SK-N-SH (cell line): ENCODE measurements at regions of chr9 and their contacts with region 1.

Region 1: GRCh38 chr9:122107291-122107805 is 14.2 kb upstream of the TTLL11 start:
- DNase-seq: peak; percentile 12
- H3K4me3 ChIP-seq: no peak overlapping the region
- H3K27ac ChIP-seq: no peak overlapping the region
- H3K4me1 ChIP-seq: no peaks in the 10 kb centered on the region
- H3K27me3 ChIP-seq: no peaks in the 10 kb centered on the region
- CTCF ChIP-seq: no peak
- EP300 ChIP-seq: no peak
- RAD21 ChIP-seq: no peak

Region 2: DNA sequence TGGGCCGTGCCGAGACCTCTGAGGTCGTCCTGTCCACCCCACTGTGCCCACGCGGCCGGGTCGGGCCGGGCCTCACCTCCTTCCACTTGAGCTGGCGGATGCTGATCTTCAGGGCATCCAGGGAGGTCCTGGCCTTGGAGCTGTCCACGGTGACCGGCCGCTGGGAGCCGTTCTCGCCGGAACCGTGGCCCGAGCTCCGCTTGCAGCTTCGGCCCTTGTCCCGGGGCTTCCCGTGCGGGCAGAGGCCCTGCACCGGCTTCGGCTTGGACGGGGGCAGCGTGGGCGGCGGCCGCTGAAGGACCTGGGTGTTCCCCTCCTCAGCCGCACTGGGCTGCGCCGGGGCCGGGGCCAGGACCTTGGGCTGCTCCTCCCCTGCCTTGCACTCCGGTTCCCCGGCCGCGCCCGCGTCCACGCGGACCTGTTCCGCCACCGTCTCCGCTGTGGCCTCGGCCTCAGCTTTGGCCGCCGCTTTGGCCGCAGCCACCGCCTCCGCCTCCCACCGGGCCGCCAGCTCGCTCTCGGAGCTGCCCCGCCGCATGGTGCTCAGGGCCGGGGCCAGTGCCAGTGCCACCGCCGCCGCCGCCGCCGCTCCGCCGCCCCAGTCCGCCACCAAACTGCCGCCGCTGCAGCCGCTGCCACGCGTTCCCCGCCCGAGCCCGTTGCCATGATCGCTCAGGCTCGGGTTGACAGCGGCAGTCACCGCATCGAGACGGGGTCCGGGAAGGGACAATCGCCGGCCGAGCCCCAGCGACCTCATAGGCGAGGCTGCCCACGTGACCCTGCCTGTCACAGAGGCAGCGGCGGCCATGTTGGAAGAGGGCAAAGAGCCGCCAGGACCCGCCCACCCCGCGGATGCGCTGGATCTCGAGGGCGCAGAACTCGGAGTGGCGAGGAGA is 14.5 kb before region 1 on chr9 and contains the start of gene TTLL11:
- CTCF ChIA-PET with region 1: interaction called, 55 read pairs
- POLR2A ChIA-PET with region 1: no interaction called
- DNase-seq: peak; percentile 98
- H3K4me3 ChIP-seq: peak within 1 kb of the TSS; percentile 88 to 90
- H3K27ac ChIP-seq: peak within 1 kb of the TSS in 1 of 2 experiments; percentile 14; a peak in 1 of 4 replicates
- H3K4me1 ChIP-seq: peaks cover 6 to 19% of the 10 kb centered on the region in 2 experiments; a peak in 2 of 4 replicates
- H3K27me3 ChIP-seq: no peaks in the 10 kb centered on the region
- CTCF ChIP-seq: no peak
- EP300 ChIP-seq: no peak
- RAD21 ChIP-seq: no peak
- polyA plus RNA-seq, gene TTLL11: 6.0 and 6.8 TPM in 2 replicates